SK-N-SH (cell line): ENCODE measurements at regions of chr3 and their contacts with region 1.

Region 1: GRCh38 chr3:69143605-69144004 is 21.2 kb upstream of the LMOD3 start:
- DNase-seq: no peak
- H3K4me3 ChIP-seq: no peak overlapping the region
- H3K27ac ChIP-seq: no peak overlapping the region
- H3K4me1 ChIP-seq: peaks cover 4 to 15% of the 10 kb centered on the region in 2 experiments; a peak in 3 of 4 replicates
- H3K27me3 ChIP-seq: no peaks in the 10 kb centered on the region
- CTCF ChIP-seq: no peak
- EP300 ChIP-seq: no peak
- RAD21 ChIP-seq: no peak

Region 2: GRCh38 chr3:69120879-69121464 is 22.6 kb before region 1 on chr3:
- CTCF ChIA-PET with region 1: interaction called, 16 read pairs
- POLR2A ChIA-PET with region 1: no interaction called
- DNase-seq: peak; percentile 37
- H3K4me3 ChIP-seq: no peak overlapping the region; a peak in 1 of 4 replicates
- H3K27ac ChIP-seq: no peak overlapping the region
- H3K4me1 ChIP-seq: no peaks in the 10 kb centered on the region
- H3K27me3 ChIP-seq: no peaks in the 10 kb centered on the region
- CTCF ChIP-seq: peak; percentile 97
- EP300 ChIP-seq: no peak
- RAD21 ChIP-seq: peak; percentile 86